ENCODE measurements at regions of chr15 and their contacts with region 1.

Region 1: GRCh38 chr15:97745465-97746071 is 214.9 kb upstream of the ARRDC4 start:
- DNase-seq: peak; percentile 75
- H3K4me3 ChIP-seq: no peak overlapping the region
- H3K27ac ChIP-seq: no peak overlapping the region
- H3K4me1 ChIP-seq: no peaks in the 10 kb centered on the region
- H3K27me3 ChIP-seq: no peaks in the 10 kb centered on the region
- CTCF ChIP-seq: peak; percentile 72

Region 2: DNA sequence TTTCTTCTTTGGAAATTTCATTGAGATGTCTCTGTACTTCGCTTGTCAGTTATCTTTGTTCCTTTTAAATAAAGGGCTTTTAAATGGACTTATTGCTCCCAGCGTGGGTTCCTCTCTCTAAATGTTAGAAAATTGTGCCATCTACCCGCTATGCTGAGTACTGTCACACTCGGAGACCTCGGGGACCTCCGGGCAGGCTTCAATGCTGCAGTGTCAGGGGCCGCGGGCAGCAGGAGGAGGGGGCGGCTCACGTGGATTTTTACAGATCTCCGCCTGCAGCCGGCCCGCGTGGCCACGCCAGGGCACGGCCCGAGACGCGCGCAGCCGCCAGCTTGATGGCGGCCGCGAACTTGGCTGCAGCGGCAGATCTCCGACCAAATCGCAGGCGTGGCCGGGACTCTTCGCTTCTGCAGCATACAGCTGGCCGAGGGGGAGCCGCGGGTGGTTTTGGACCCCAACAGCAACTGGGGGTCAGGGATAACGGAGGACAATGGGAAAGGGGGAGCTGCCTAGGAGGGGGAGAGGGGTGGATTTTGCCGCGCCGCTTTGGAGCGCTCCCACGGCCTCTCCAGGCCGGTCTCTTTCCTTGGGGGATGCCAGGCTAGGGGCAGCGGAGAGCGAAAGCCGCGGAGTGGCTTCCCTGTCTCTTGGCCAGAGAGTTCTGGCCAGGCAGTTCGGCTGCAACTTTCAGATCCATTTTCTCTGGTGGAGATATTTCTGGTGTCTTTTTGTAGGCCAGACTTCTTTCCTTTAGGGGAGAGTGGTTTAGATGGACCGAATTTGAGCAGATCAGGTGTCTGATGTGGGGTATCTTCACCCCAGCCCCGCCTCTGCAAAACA is 1399.8 kb before region 1 on chr15:
- CTCF ChIA-PET with region 1: no interaction called
- POLR2A ChIA-PET with region 1: no interaction called
- intact Hi-C with region 1: loop called (anchors 5 kb)
- DNase-seq: peak; percentile 88
- H3K4me3 ChIP-seq: peak overlapping the region; percentile 50
- H3K27ac ChIP-seq: peak overlapping the region; percentile 79
- H3K4me1 ChIP-seq: peaks cover 88% of the 10 kb centered on the region
- H3K27me3 ChIP-seq: no peaks in the 10 kb centered on the region
- CTCF ChIP-seq: peak; percentile 79

Region 3: GRCh38 chr15:97585408-97585807 is 160.2 kb before region 1 on chr15:
- CTCF ChIA-PET with region 1: no interaction called
- POLR2A ChIA-PET with region 1: no interaction called
- intact Hi-C with region 1: no loop called
- DNase-seq: no peak
- H3K4me3 ChIP-seq: no peak overlapping the region
- H3K27ac ChIP-seq: no peak overlapping the region
- H3K4me1 ChIP-seq: no peaks in the 10 kb centered on the region
- H3K27me3 ChIP-seq: no peaks in the 10 kb centered on the region
- CTCF ChIP-seq: no peak